ENCODE measurements at regions of chr10 and their contacts with region 1.

Region 1: GRCh38 chr10:53702489-53702888 is 929.9 kb upstream of the MBL2 start:
- DNase-seq: no peak
- ATAC-seq: no peak

Region 2: DNA sequence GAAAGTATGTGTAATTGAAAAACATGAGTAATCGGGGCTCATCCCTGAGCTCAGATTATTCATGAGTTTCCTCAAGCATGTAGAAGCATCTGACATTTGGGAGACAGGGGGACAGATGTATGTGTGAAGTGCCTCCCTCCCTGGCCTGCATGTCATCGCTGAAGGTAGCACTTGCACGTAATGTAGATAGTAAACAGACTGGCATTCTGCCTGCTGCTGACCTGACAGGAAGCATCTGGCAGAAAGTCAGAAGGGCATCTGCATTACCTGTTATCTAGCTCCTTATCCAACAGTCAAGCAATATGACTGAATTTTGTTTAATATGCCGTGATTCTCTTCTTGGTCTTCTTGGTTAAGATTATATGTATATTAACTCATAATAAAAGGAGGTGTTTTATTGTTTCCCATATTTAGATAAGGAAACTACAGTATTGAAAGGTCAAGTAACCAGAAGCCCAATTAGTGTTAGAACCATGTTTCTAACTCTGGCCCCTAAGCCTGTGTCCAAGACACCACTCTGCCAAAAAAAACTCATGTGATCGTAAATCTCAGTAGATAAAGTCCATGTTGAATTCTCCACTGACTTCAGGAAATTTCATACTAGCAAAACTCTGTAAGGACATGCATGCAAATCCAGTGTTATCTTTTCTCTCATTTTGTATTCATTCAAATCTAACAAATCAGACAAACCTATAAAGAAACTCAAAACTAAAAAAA is 11.8 kb before region 1 on chr10:
- intact Hi-C with region 1: loop called (anchors 2 kb)
- DNase-seq: no peak
- ATAC-seq: no peak

Region 3: GRCh38 chr10:53726921-53727320 is 24.4 kb after region 1 on chr10:
- intact Hi-C with region 1: no loop called
- DNase-seq: no peak
- ATAC-seq: no peak